ENCODE measurements at regions of chr22 and their contacts with region 1.

Region 1: DNA sequence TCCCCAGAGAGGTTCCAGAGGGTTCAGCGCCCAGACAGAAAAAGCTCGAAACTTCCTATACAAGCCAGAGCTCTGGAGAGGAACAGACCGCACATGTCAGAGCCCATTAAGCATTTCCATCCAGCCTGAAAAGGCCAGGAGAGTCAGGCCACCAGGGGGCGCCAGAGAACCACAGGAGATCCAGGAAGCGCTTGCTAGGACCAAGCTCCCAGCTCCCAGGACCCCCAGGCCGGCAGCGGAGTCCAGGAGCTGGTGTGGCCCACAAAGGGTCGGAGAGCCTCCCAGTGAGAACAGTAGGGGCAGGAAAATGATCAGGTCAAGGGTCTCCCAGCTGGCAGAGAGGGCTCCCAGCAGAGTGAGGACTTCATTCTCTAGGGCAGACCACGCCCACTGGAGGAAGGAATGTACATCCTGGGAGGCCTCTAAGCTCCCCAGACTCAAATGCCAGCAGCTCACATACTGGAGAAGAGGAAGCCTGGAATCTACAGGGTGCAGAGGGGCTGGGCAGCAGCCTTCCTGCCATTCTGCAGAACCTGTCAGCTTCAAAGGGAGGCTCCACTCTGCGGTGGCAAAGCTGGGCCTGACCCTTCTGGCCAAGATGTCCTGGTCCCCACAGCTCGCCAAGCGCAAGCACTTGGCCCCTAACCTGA is 2.1 kb upstream of the MEI1 start:
- DNase-seq: peak; percentile 88 to 93
- H3K4me3 ChIP-seq: peak overlapping the region; percentile 5
- H3K4me3 Mint-ChIP-seq: peak overlapping the region; percentile 72
- H3K27ac Mint-ChIP-seq: peak overlapping the region; percentile 94
- H3K4me1 ChIP-seq: peaks cover 12% of the 10 kb centered on the region
- H3K4me1 Mint-ChIP-seq: no peaks in the 10 kb centered on the region
- H3K27me3 ChIP-seq: no peaks in the 10 kb centered on the region
- H3K27me3 Mint-ChIP-seq: no peaks in the 10 kb centered on the region
- CTCF ChIP-seq: peak; percentile 86 to 97

Region 2: DNA sequence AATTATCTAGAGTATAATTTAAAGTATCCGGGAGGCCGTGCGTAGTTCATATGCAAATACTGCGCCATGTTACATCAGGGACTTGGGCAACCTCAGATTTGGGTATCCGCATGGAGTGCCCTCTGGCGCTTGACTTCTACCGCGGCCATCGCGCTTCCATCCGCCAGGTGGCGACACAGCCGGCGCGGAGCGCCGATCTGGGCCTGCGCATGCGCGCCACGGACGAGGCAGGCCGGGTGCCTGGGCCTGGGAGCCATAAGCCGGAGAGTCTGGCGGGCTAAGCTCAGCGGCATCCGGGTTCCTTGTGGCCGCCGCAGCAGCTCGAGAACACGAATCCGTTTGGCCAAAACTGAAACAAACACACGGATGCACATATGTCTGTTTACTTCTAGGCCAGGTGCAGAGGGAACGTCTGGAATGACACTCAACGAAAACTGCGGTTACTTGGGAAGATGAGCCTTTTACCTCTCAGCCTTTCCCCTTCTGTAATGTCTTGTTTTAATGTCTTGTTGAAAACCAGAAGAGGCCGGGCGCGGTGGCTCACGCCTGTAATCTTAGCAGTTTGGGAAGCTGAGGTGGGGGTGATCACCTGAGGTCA is 30.5 kb before region 1 on chr22:
- CTCF ChIA-PET with region 1: interaction called, 12 read pairs
- POLR2A ChIA-PET with region 1: interaction called, 4 read pairs
- intact Hi-C with region 1: no loop called
- DNase-seq: peak; percentile 76 to 79
- H3K4me3 ChIP-seq: no peak overlapping the region
- H3K4me3 Mint-ChIP-seq: peak overlapping the region; percentile 47
- H3K27ac Mint-ChIP-seq: peak overlapping the region; percentile 53
- H3K4me1 ChIP-seq: 0 out of 2 replicates have a peak, but pooled peaks cover 4% of the 10 kb centered on the region
- H3K4me1 Mint-ChIP-seq: peaks cover 6% of the 10 kb centered on the region
- H3K27me3 ChIP-seq: no peaks in the 10 kb centered on the region
- H3K27me3 Mint-ChIP-seq: no peaks in the 10 kb centered on the region
- CTCF ChIP-seq: peak; percentile 54 to 70

Region 3: GRCh38 chr22:41746567-41747400 is 49.5 kb after region 1 on chr22:
- CTCF ChIA-PET with region 1: interaction called, 31 read pairs
- POLR2A ChIA-PET with region 1: interaction called, 3 read pairs
- intact Hi-C with region 1: loop called (anchors 1 kb)
- DNase-seq: peak; percentile 80 to 84
- H3K4me3 ChIP-seq: no peak overlapping the region
- H3K4me3 Mint-ChIP-seq: no peak overlapping the region
- H3K27ac Mint-ChIP-seq: no peak overlapping the region
- H3K4me1 ChIP-seq: no peaks in the 10 kb centered on the region
- H3K4me1 Mint-ChIP-seq: no peaks in the 10 kb centered on the region
- H3K27me3 ChIP-seq: no peaks in the 10 kb centered on the region
- H3K27me3 Mint-ChIP-seq: peaks cover 3% of the 10 kb centered on the region
- CTCF ChIP-seq: peak; percentile 62 to 91

Region 4: GRCh38 chr22:41800348-41801146 is 103.3 kb after region 1 on chr22 and contains the start of gene CCDC134:
- CTCF ChIA-PET with region 1: interaction called, 71 read pairs
- POLR2A ChIA-PET with region 1: interaction called, 27 read pairs
- intact Hi-C with region 1: no loop called
- DNase-seq: peak; percentile 88 to 93
- H3K4me3 ChIP-seq: peak within 1 kb of the TSS; percentile 82
- H3K4me3 Mint-ChIP-seq: peak within 1 kb of the TSS; percentile 89
- H3K27ac Mint-ChIP-seq: peak within 1 kb of the TSS; percentile 91
- H3K4me1 ChIP-seq: peaks cover 6% of the 10 kb centered on the region; the same call in 1 of the 2 replicates
- H3K4me1 Mint-ChIP-seq: peaks cover 7% of the 10 kb centered on the region
- H3K27me3 ChIP-seq: no peaks in the 10 kb centered on the region
- H3K27me3 Mint-ChIP-seq: no peaks in the 10 kb centered on the region
- CTCF ChIP-seq: no peak
- total RNA-seq, gene CCDC134: 24.3 and 24.8 TPM in 2 replicates

Region 5: DNA sequence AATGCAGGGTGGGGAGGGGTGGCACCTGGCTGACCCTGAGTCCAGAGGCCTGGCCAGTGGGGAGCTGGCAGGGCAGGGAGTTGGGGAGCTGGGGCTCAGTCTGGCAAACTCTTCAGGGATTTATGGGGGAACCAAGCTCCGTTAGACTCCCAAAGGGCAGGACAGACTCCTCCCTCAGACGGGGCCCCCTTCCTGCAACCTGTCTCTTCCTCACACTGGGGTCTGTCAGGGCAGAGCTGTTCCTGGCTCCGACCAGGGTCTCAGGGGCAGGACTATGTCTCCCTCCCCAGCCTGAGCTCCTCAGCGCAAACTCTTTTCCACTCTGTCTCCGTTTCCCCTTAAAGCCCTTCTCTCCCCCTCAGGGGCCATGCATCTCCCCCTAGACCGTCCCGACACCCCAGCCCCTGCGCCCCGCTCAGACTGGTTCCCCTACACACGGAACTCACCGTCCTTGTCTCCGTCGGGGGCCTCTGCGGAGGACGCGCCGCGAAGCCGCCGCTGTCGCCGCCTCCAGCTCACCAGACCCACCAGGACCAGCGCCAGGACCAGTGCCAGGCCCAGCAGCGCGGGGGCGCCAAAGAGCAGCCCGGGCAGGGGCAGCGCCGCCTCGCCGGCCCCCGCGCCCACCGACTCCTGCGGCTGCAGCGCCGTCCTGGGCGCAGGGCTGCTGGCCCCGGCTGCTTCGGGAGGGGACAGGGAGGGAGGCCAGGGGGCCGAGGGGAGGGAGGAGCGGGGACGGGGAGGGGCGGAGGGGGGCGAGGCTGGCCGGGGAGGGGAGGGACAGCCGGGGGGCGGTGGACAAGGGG is 228.6 kb after region 1 on chr22:
- CTCF ChIA-PET with region 1: interaction called, 20 read pairs
- POLR2A ChIA-PET with region 1: no interaction called
- intact Hi-C with region 1: no loop called
- DNase-seq: peak; percentile 73 to 92
- H3K4me3 ChIP-seq: peak overlapping the region; percentile 27
- H3K4me3 Mint-ChIP-seq: peak overlapping the region; percentile 77
- H3K27ac Mint-ChIP-seq: no peak overlapping the region
- H3K4me1 ChIP-seq: no peaks in the 10 kb centered on the region
- H3K4me1 Mint-ChIP-seq: no peaks in the 10 kb centered on the region
- H3K27me3 ChIP-seq: no peaks in the 10 kb centered on the region
- H3K27me3 Mint-ChIP-seq: no peaks in the 10 kb centered on the region
- CTCF ChIP-seq: peak; percentile 75 to 77

Region 6: DNA sequence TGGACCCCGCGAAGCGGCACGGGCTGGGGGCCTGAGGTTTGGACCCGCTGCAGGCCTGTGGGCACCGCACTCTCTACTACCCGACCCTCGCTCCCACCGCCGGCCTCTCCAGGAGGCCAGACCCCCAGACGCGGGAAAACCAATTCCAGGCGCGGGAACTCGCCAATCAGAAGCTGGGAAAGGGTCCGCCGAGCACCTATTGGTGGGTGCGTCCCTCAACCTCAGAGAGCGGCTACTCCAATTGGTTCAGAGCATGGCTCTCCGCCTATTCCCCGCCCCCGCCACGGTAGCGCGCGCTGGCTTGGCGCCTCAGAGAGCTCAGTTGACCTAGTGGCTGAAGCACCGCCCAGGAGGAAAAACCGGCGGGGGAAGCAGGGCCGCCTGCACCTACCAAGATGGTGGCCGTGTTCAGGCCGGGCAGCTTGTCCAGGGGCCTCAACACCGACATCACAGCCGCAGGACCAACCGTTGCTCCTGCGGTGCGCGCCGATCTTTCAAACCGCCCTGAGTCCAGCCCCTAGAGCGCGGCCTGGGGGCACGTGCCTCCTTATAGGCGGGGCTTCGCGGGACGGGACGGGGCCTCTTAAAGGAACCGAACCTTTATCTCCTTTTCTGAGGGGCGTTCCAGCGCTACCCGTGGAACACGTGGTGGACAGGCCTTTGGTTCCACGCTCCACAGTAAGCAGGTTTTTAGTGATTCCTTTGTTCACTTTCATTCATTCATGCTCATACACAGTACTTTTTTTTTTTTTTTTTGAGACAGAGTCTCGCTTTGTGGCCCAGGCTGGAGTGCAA is 249.6 kb after region 1 on chr22 and contains the start of gene CENPM:
- CTCF ChIA-PET with region 1: interaction called, 27 read pairs
- POLR2A ChIA-PET with region 1: interaction called, 3 read pairs
- intact Hi-C with region 1: no loop called
- DNase-seq: peak; percentile 96 to 97
- H3K4me3 ChIP-seq: peak within 1 kb of the TSS; percentile 47
- H3K4me3 Mint-ChIP-seq: peak within 1 kb of the TSS; percentile 93
- H3K27ac Mint-ChIP-seq: peak within 1 kb of the TSS; percentile 81
- H3K4me1 ChIP-seq: peaks cover 11% of the 10 kb centered on the region
- H3K4me1 Mint-ChIP-seq: peaks cover 13% of the 10 kb centered on the region
- H3K27me3 ChIP-seq: no peaks in the 10 kb centered on the region
- H3K27me3 Mint-ChIP-seq: no peaks in the 10 kb centered on the region
- CTCF ChIP-seq: peak in 1 of 2 experiments; percentile 6
- total RNA-seq, gene CENPM: 44.1 and 46.4 TPM in 2 replicates

Measured in Caco-2 (cell line).